GM12878 (cell line): ENCODE measurements at regions of chr5 and their contacts with region 1.

Region 1: DNA sequence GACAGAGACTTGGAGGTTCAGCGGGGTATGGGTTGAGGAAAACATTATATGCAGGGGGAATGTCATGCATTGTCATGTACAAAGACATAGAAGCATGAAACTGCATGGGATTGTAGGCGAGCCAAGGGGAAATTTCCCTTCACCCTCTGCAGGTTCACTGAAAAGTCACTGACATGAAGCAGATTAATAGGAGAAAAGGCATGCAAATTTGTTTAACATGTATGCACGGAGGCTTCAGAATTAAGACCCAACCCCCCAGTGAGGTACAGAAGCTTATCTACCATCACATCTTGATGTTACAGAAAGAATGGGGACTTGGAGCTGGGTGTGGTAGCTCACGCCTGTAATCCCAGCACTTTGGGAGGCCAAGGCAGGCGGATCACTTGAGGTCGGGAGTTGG is 18.5 kb downstream of the NIM1K start:
- DNase-seq: no peak
- ATAC-seq: peak; percentile 32
- H3K4me3 ChIP-seq: no peak overlapping the region
- H3K27ac ChIP-seq: no peak overlapping the region
- H3K4me1 ChIP-seq: no peaks in the 10 kb centered on the region
- H3K27me3 ChIP-seq: no peaks in the 10 kb centered on the region
- CTCF ChIP-seq: no peak
- EP300 ChIP-seq: no peak
- POLR2A ChIP-seq: no peak
- RAD21 ChIP-seq: no peak

Region 2: DNA sequence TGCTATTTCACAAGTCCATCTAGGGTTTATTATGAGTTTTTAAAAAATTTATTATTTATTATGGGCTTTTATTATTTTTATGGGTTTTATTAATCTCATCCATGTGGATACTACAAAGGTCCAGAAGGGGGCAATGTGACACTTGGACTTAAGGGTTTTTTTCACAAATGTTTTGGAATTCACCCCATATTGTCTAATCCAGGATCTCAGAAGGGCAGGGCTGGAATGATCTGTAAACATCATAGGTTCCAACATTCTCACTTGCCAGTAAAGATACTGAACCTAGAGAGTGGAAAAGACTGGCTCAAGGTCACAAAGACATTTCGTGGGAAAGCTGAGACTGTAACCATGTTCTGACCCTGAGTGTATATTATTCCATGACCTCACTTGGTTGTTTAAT is 17.1 kb after region 1 on chr5:
- CTCF ChIA-PET with region 1: interaction called, 13 read pairs
- POLR2A ChIA-PET with region 1: no interaction called
- RAD21 ChIA-PET with region 1: interaction called, 3 read pairs
- SMC1A ChIA-PET with region 1: interaction called, 5 read pairs
- in situ Hi-C with region 1: no loop called
- intact Hi-C with region 1: no loop called
- DNase-seq: no peak
- ATAC-seq: peak; percentile 18; the same call in 1 of the 3 replicates
- H3K4me3 ChIP-seq: no peak overlapping the region
- H3K27ac ChIP-seq: no peak overlapping the region
- H3K4me1 ChIP-seq: no peaks in the 10 kb centered on the region
- H3K27me3 ChIP-seq: no peaks in the 10 kb centered on the region
- CTCF ChIP-seq: peak; percentile 17 to 50 (median 22); a peak in 4 of 6 replicates
- EP300 ChIP-seq: no peak
- POLR2A ChIP-seq: no peak
- RAD21 ChIP-seq: peak; percentile 72